Heart left ventricle (tissue), 16 donors: ENCODE measurements at regions of chr3 and their contacts with region 1.

Region 1: DNA sequence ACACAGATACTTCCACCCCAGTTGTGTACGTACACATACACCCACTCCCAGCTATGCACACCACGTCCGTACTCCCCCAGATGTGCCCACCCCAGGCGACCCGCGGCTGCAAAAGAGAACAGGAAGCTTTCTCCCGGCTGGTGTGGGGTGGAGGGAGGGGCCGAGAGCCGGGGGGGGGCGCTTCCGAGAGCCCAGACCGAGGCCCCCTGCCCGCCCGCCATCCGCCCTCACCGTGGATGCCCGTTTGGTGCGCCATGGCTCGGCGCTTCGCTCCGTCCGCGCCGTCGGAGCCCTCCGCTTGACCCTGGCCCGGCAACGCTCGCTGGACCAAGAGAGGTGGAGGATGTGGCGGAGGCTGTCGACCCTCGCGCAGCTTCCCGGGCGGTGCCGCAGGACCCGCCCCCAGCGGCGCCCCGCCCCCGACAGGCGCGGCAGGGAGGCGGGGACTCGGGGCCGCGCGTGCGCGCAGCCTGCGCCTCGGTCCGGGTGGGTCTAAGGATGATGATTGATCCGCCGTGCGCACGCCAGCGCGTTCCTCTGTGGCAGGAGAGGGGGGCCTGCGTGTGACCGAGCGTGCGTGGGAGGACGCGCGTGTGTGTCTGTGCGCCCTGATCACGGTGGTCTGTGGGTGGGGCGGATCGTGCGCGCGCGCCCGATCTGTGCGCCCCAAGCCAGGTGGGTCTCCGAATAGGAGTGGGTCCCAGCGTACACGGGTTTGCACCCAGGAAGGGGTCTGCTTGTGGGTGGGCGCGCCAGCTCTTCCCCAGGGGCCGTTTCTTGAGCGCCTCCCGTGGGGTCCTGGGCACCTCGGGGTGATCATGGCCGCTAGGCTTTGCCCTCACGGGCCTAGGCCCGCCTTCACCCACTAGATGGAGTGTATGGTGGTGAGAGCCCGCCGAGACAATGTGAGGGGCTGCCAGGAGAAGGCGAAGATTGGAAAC is at the start of gene TWF2:
- DNase-seq: peak; percentile 85 to 92 (median 88)
- ATAC-seq: peak; percentile 33 to 86 (median 77)
- H3K4me3 ChIP-seq: peak within 1 kb of the TSS; percentile 79 to 99 (median 96)
- H3K27ac ChIP-seq: peak within 1 kb of the TSS; percentile 66 to 97 (median 91)
- H3K4me1 ChIP-seq: peaks cover 10 to 75% (median 45%) of the 10 kb centered on the region in 12 donors
- H3K27me3 ChIP-seq: no peaks in the 10 kb centered on the region
- CTCF ChIP-seq: peak; percentile 24 to 66 (median 41)
- POLR2A ChIP-seq: peak in 1 of 2 donors; percentile 88
- total RNA-seq, gene TWF2: 62.9 to 133 (median 117) TPM

Region 2: GRCh38 chr3:52270252-52270754 is 31.3 kb after region 1 on chr3:
- intact Hi-C with region 1: loop called in 6 of 10 experiments (anchors 5 kb)
- DNase-seq: no peak
- ATAC-seq: peak in 3 of 4 donors; percentile 11 to 40 (median 40)
- H3K4me3 ChIP-seq: peak overlapping the region in 1 of 12 donors; percentile 35
- H3K27ac ChIP-seq: peak overlapping the region; percentile 1 to 94 (median 40)
- H3K4me1 ChIP-seq: peaks cover 3 to 79% (median 64%) of the 10 kb centered on the region in 12 donors
- H3K27me3 ChIP-seq: no peaks in the 10 kb centered on the region
- CTCF ChIP-seq: no peak
- POLR2A ChIP-seq: no peak

Region 3: GRCh38 chr3:52278510-52279069 is 39.6 kb after region 1 on chr3 and contains the start of gene WDR82:
- intact Hi-C with region 1: loop called in 9 of 10 experiments (anchors 2 to 5 kb)
- DNase-seq: peak; percentile 98 to 99 (median 99)
- ATAC-seq: peak; percentile 89 to 97 (median 96)
- H3K4me3 ChIP-seq: peak within 1 kb of the TSS; percentile 73 to 99 (median 82)
- H3K27ac ChIP-seq: peak within 1 kb of the TSS; percentile 94 to 99 (median 98)
- H3K4me1 ChIP-seq: peaks cover 0 to 80% (median 54%) of the 10 kb centered on the region in 12 donors
- H3K27me3 ChIP-seq: no peaks in the 10 kb centered on the region
- CTCF ChIP-seq: peak; percentile 39 to 69 (median 56)
- POLR2A ChIP-seq: peak in 1 of 2 donors; percentile 68
- total RNA-seq, gene WDR82: 44.9 to 73.6 (median 61.2) TPM

Region 4: GRCh38 chr3:52455283-52456168 is 216.5 kb after region 1 on chr3 and contains the start of gene NISCH:
- intact Hi-C with region 1: no loop called
- DNase-seq: peak; percentile 92 to 96 (median 94)
- ATAC-seq: peak; percentile 13 to 59 (median 36)
- H3K4me3 ChIP-seq: peak within 1 kb of the TSS; percentile 57 to 92 (median 81)
- H3K27ac ChIP-seq: peak within 1 kb of the TSS; percentile 85 to 99 (median 94)
- H3K4me1 ChIP-seq: peaks cover 0 to 39% (median 23%) of the 10 kb centered on the region in 12 donors
- H3K27me3 ChIP-seq: no peaks in the 10 kb centered on the region
- CTCF ChIP-seq: peak in 1 of 12 donors; percentile 6
- POLR2A ChIP-seq: peak in 1 of 2 donors; percentile 66
- total RNA-seq, gene NISCH: 29.5 to 56.2 (median 43.9) TPM